ENCODE measurements at regions of chrX and their contacts with region 1.

Region 1: DNA sequence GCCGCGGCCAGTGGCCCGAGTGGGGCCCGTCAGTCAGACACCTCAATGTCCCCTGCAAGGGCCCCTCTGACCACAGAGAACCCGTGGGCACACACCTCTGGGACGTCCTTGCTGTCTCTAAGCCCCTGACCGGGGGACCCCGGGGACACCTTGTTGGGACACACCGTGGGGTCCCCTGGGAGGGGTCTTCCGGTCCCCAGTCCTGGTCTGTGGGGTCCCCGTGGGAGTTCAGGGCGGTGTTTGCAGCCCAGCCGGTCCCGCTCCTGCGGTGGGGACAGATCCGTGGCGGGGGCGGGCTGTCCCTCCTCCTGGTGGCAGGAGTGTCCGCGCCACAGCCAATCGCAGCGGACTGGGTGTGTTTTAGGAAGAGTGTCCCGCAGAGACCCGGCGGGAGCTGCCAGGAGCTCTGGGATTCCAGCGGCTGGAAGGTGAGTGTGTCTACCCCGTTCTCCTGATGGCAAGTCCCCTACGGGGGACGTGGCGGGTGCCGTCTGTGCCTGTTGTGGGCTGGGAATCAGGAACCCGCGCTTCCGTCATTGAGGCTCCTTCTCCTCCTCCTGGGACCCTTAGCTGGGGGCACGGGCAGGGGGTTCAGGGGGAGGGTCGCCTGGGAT is 5.1 kb upstream of the PLCXD1 start:
- DNase-seq: peak in 8 of 9 experiments; percentile 21 to 67 (median 51)
- ATAC-seq: peak; percentile 77
- H3K4me3 ChIP-seq: peak overlapping the region; percentile 64 to 65
- H3K4me3 Mint-ChIP-seq: peak overlapping the region; percentile 80
- H3K27ac ChIP-seq: no peak overlapping the region
- H3K27ac Mint-ChIP-seq: no peak overlapping the region
- H3K4me1 ChIP-seq: peaks cover 28% of the 10 kb centered on the region
- H3K4me1 Mint-ChIP-seq: peaks cover 15% of the 10 kb centered on the region
- H3K27me3 ChIP-seq: peaks cover 0 to 5% of the 10 kb centered on the region in 2 experiments
- H3K27me3 Mint-ChIP-seq: no peaks in the 10 kb centered on the region
- CTCF ChIP-seq: no peak

Region 2: DNA sequence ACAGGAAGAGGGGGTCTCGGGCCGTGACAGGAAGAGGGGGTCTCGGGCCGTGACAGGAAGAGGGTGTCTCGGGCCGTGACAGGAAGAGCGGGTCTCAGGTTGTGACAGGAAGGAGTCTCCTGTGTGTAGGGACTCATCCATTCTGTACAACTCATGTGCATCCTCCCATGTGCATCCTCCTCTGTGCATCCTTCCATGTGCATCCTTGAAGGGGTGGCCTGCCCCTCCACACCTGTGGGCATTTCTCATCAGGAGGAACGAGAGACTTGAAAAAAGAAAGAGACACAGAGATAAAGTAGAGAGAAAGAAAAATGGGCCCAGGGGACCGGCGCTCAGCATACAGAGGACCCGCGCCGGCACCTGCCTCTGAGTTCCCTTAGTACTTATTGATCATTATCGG is 25.1 kb before region 1 on chrX:
- CTCF ChIA-PET with region 1: no interaction called
- POLR2A ChIA-PET with region 1: no interaction called
- intact Hi-C with region 1: loop called in 1 of 2 experiments (anchors 2 kb)
- DNase-seq: peak in 4 of 9 experiments; percentile 16 to 56 (median 26)
- ATAC-seq: peak; percentile 81
- H3K4me3 ChIP-seq: peak overlapping the region in 1 of 2 experiments; percentile 2
- H3K4me3 Mint-ChIP-seq: peak overlapping the region; percentile 63
- H3K27ac ChIP-seq: peak overlapping the region; percentile 45 to 80
- H3K27ac Mint-ChIP-seq: peak overlapping the region; percentile 96
- H3K4me1 ChIP-seq: peaks cover 16% of the 10 kb centered on the region
- H3K4me1 Mint-ChIP-seq: peaks cover 26% of the 10 kb centered on the region
- H3K27me3 ChIP-seq: no peaks in the 10 kb centered on the region
- H3K27me3 Mint-ChIP-seq: no peaks in the 10 kb centered on the region
- CTCF ChIP-seq: no peak

Region 3: DNA sequence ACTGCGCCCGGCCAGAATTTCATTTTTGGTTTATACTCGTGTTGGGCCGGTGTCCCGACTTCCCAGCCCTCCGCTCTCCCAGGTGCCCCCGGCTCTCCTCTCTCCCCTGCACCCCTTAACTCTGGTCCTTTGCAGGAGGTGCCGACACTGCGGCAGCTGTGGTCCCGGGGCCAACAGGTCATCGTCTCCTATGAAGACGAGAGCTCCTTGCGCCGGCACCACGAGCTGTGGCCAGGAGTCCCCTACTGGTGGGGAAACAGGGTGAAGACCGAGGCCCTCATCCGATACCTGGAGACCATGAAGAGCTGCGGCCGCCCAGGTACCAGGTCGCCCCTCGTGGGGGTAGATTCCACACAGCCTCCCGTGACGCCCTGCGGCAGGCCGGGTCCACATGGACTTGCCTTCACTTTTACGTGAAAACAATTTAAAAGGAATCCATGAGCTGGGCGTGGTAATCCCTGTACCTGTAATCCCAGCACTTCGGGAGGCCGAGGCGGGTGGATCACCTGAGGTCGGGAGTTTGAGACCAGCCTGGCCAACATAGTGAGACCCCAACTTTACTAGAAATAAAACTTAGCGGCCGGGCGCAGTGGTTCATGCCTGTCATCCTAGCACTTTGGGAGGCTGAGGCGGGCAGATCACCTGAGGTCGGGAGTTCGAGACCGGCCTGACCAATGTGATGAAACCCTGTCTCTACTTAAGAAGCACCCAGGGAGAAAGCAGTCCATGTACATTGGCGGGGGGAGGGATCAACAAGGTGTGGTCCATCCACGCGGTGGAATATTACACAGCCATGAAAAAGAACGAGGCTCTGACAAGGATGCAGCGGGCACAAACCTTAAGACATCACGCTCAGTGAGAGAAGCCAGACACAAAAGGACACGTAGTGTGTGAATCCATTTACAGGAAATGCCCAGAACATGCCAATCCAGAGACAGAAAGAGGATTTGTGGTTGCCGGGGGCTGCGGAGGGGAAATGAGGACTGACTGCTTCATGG is 17.1 kb after region 1 on chrX:
- CTCF ChIA-PET with region 1: no interaction called
- POLR2A ChIA-PET with region 1: no interaction called
- intact Hi-C with region 1: no loop called
- DNase-seq: peak in 1 of 9 experiments; percentile 3
- ATAC-seq: no peak
- H3K4me3 ChIP-seq: no peak overlapping the region
- H3K4me3 Mint-ChIP-seq: no peak overlapping the region
- H3K27ac ChIP-seq: no peak overlapping the region
- H3K27ac Mint-ChIP-seq: no peak overlapping the region
- H3K4me1 ChIP-seq: no peaks in the 10 kb centered on the region
- H3K4me1 Mint-ChIP-seq: no peaks in the 10 kb centered on the region
- H3K27me3 ChIP-seq: no peaks in the 10 kb centered on the region
- H3K27me3 Mint-ChIP-seq: no peaks in the 10 kb centered on the region
- CTCF ChIP-seq: no peak